IMR-90 (cell line): ENCODE measurements at regions of chr6 and their contacts with region 1.

Region 1: DNA sequence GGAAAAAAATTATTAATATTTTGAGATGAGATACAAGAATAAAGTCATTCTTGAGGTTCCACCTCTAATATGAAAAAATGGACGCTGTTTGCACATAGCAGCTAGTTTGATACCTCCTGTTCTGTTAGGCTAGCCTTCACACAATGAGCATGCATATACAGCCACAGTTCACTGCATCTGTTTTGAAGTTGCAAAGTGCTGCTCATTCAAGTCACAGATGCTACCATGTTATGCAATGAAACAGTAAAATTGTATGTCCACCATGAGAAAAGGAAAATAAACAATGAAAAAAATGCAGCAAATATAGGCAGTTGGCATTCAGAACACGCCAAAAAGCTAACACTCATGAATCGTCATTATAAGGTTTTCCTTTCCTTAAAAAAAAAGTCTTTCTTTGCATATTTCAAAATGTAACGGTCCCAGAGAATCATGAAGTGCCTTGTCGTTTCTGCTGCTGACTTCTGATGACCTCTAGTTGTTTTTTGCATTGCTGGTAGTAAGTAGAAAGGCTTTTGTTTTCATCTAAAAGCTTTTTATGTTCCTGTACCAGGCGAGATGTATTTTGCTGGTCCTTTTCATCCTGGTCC is 70.7 kb downstream of the MAP3K7 start:
- DNase-seq: no peak
- ATAC-seq: no peak
- H3K4me3 ChIP-seq: no peak overlapping the region
- H3K27ac ChIP-seq: no peak overlapping the region
- H3K4me1 ChIP-seq: no peaks in the 10 kb centered on the region
- H3K27me3 ChIP-seq: no peaks in the 10 kb centered on the region
- CTCF ChIP-seq: no peak
- POLR2A ChIP-seq: no peak
- RAD21 ChIP-seq: no peak

Region 2: DNA sequence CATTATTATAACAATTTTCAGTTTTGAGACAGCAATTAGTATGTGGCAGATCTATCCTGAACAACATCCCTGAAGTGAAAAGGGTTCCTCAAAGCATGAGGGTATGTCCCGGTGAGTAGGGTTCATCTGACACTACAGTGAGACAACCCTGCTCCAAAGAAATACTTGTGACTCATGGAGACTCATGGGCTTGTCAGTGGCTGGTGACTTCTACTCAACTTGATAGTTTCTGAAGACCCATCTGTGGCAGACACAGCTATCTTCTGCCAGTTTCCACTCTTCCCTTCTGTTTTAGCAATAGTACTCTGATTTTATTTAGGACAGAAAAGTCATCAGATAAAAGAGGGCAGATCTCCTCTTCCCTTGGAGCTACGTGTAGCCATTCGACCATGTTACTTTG is 29.3 kb after region 1 on chr6:
- CTCF ChIA-PET with region 1: no interaction called
- POLR2A ChIA-PET with region 1: no interaction called
- dilution Hi-C with region 1: no loop called
- in situ Hi-C with region 1: no loop called
- intact Hi-C with region 1: loop called (anchors 5 kb)
- DNase-seq: peak; percentile 31
- ATAC-seq: no peak
- H3K4me3 ChIP-seq: no peak overlapping the region
- H3K27ac ChIP-seq: no peak overlapping the region
- H3K4me1 ChIP-seq: no peaks in the 10 kb centered on the region
- H3K27me3 ChIP-seq: no peaks in the 10 kb centered on the region
- CTCF ChIP-seq: no peak
- POLR2A ChIP-seq: no peak
- RAD21 ChIP-seq: no peak